ENCODE measurements at regions of chr16 and their contacts with region 1.

Region 1: GRCh38 chr16:77574867-77575624 is 140.2 kb upstream of the ADAMTS18 start:
- DNase-seq: no peak
- H3K4me3 ChIP-seq: no peak overlapping the region
- H3K4me3 Mint-ChIP-seq: no peak overlapping the region
- H3K27ac Mint-ChIP-seq: no peak overlapping the region
- H3K4me1 ChIP-seq: no peaks in the 10 kb centered on the region
- H3K4me1 Mint-ChIP-seq: no peaks in the 10 kb centered on the region
- H3K27me3 ChIP-seq: no peaks in the 10 kb centered on the region
- H3K27me3 Mint-ChIP-seq: peaks cover 10% of the 10 kb centered on the region
- CTCF ChIP-seq: no peak

Region 2: GRCh38 chr16:77918809-77919707 is 344.0 kb after region 1 on chr16:
- CTCF ChIA-PET with region 1: interaction called, 12 read pairs
- POLR2A ChIA-PET with region 1: no interaction called
- intact Hi-C with region 1: no loop called
- DNase-seq: no peak
- H3K4me3 ChIP-seq: no peak overlapping the region
- H3K4me3 Mint-ChIP-seq: no peak overlapping the region
- H3K27ac Mint-ChIP-seq: no peak overlapping the region
- H3K4me1 ChIP-seq: 0 out of 2 replicates have a peak, but pooled peaks cover 5% of the 10 kb centered on the region
- H3K4me1 Mint-ChIP-seq: peaks cover 8% of the 10 kb centered on the region
- H3K27me3 ChIP-seq: no peaks in the 10 kb centered on the region
- H3K27me3 Mint-ChIP-seq: peaks cover 23% of the 10 kb centered on the region
- CTCF ChIP-seq: no peak